CD4-positive, alpha-beta T cell (primary cell): ENCODE measurements at regions of chr20 and their contacts with region 1.

Region 1: GRCh38 chr20:47677635-47678453 is 107.4 kb downstream of the SULF2 start:
- DNase-seq: peak in 13 of 14 experiments; percentile 36 to 73 (median 47)
- ATAC-seq: peak; percentile 65
- H3K4me3 ChIP-seq: no peak overlapping the region
- H3K4me3 Mint-ChIP-seq: no peak overlapping the region
- H3K27ac ChIP-seq: no peak overlapping the region
- H3K27ac Mint-ChIP-seq: no peak overlapping the region
- H3K4me1 ChIP-seq: peaks cover 6% of the 10 kb centered on the region
- H3K4me1 Mint-ChIP-seq: peaks cover 6% of the 10 kb centered on the region
- H3K27me3 ChIP-seq: no peaks in the 10 kb centered on the region
- H3K27me3 Mint-ChIP-seq: no peaks in the 10 kb centered on the region
- CTCF ChIP-seq: peak; percentile 72

Region 2: DNA sequence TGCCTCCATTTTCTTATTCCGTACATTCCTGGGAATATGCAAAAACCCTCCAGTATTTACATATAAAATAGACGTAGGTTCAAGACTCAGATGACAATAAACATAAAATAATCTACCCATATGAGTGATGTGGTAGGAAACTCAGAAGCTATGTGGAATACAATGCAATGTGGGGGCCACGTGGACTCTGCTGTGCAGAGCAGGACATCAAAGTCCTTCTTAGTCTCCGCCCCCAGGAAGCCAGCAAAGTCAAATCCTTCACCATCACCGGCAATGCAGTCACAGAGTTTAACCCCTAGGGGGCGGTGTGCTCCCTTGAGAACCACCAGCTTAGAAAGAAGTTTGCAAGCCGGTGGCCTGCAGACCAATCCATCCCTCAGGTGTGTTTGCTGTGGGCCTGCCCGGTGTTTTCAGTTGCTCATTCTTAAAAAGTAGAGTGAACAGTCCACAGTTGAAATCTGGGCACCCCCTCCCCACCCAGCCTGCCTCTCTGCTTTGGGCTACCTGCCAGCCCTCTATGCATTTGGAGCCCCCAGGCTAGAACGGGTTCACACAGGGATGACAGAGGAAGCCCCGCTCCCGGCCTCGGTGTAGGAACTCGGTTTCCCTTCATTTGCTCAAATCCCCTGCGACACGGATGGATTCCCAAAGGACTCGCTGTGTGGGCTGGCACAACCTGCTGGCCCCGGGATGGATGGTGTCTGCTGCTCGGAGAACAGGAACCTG is 47.6 kb after region 1 on chr20:
- CTCF ChIA-PET with region 1: no interaction called
- POLR2A ChIA-PET with region 1: no interaction called
- intact Hi-C with region 1: loop called in 1 of 2 experiments (anchors 5 kb)
- DNase-seq: peak; percentile 65 to 92 (median 72)
- ATAC-seq: peak; percentile 75
- H3K4me3 ChIP-seq: no peak overlapping the region
- H3K4me3 Mint-ChIP-seq: no peak overlapping the region
- H3K27ac ChIP-seq: no peak overlapping the region
- H3K27ac Mint-ChIP-seq: peak overlapping the region; percentile 75
- H3K4me1 ChIP-seq: peaks cover 45% of the 10 kb centered on the region
- H3K4me1 Mint-ChIP-seq: peaks cover 44% of the 10 kb centered on the region
- H3K27me3 ChIP-seq: no peaks in the 10 kb centered on the region
- H3K27me3 Mint-ChIP-seq: no peaks in the 10 kb centered on the region
- CTCF ChIP-seq: peak; percentile 89